PC-3 (cell line): ENCODE measurements at regions of chr4 and their contacts with region 1.

Region 1: GRCh38 chr4:140726776-140727500 is 29.2 kb downstream of the TBC1D9 start:
- DNase-seq: peak; percentile 58
- ATAC-seq: peak; percentile 42
- H3K4me3 ChIP-seq: no peak overlapping the region
- H3K27ac ChIP-seq: peak overlapping the region; percentile 50; the same call in 1 of the 2 replicates
- H3K4me1 ChIP-seq: peaks cover 39% of the 10 kb centered on the region
- H3K27me3 ChIP-seq: no peaks in the 10 kb centered on the region
- CTCF ChIP-seq: no peak

Region 2: GRCh38 chr4:140691357-140691756 is 35.6 kb before region 1 on chr4:
- CTCF ChIA-PET with region 1: no interaction called
- POLR2A ChIA-PET with region 1: no interaction called
- intact Hi-C with region 1: loop called (anchors 5 kb)
- DNase-seq: peak; percentile 26
- ATAC-seq: peak; percentile 35
- H3K4me3 ChIP-seq: no peak overlapping the region
- H3K27ac ChIP-seq: no peak overlapping the region
- H3K4me1 ChIP-seq: peaks cover 4% of the 10 kb centered on the region; the same call in 1 of the 2 replicates
- H3K27me3 ChIP-seq: no peaks in the 10 kb centered on the region
- CTCF ChIP-seq: no peak